PC-3 (cell line): ENCODE measurements at regions of chr15 and their contacts with region 1.

Region 1: GRCh38 chr15:49620658-49621368 is at the starts of genes DTWD1 and FAM227B:
- DNase-seq: peak; percentile 94
- ATAC-seq: peak; percentile 99
- H3K4me3 ChIP-seq: peak within 1 kb of the TSS; percentile 81
- H3K27ac ChIP-seq: peak within 1 kb of the TSS; percentile 82
- H3K4me1 ChIP-seq: peaks cover 15% of the 10 kb centered on the region
- H3K27me3 ChIP-seq: no peaks in the 10 kb centered on the region
- CTCF ChIP-seq: no peak
- total RNA-seq, gene DTWD1: 9.1 and 10.9 TPM in 2 replicates
- total RNA-seq, gene FAM227B: 0.98 and 1.6 TPM in 2 replicates

Region 2: GRCh38 chr15:49235446-49236124 is 385.2 kb before region 1 on chr15:
- CTCF ChIA-PET with region 1: no interaction called
- POLR2A ChIA-PET with region 1: no interaction called
- intact Hi-C with region 1: loop called (anchors 10 kb)
- DNase-seq: peak; percentile 60
- ATAC-seq: peak; percentile 88
- H3K4me3 ChIP-seq: no peak overlapping the region
- H3K27ac ChIP-seq: 0 out of 2 replicates have a peak overlapping the region, but pooled peaks have one; percentile 10
- H3K4me1 ChIP-seq: peaks cover 5% of the 10 kb centered on the region; the same call in 1 of the 2 replicates
- H3K27me3 ChIP-seq: no peaks in the 10 kb centered on the region
- CTCF ChIP-seq: peak; percentile 81

Region 3: DNA sequence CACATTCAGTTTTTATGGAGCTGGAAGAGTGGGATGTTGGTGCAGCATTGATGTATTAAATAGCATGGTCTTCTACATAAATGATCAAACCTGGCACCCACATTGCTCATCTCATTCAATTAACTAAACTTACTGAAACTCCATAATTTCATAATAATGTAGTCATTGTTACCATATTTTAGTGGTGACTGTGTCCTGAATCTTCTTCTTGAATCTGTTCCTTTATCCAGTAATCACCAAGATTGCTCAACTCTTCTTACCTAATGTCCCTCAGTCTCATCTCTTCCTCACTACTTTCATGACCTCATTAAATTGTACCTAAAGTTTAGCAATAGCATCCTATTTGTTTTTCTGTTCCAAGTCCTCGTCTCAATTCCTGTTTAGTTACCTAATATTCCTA is 128.0 kb before region 1 on chr15:
- CTCF ChIA-PET with region 1: interaction called, 3 read pairs
- POLR2A ChIA-PET with region 1: no interaction called
- intact Hi-C with region 1: loop called (anchors 2 kb)
- DNase-seq: peak; percentile 31
- ATAC-seq: no peak
- H3K4me3 ChIP-seq: no peak overlapping the region
- H3K27ac ChIP-seq: no peak overlapping the region
- H3K4me1 ChIP-seq: peaks cover 34% of the 10 kb centered on the region
- H3K27me3 ChIP-seq: no peaks in the 10 kb centered on the region
- CTCF ChIP-seq: no peak

Region 4: DNA sequence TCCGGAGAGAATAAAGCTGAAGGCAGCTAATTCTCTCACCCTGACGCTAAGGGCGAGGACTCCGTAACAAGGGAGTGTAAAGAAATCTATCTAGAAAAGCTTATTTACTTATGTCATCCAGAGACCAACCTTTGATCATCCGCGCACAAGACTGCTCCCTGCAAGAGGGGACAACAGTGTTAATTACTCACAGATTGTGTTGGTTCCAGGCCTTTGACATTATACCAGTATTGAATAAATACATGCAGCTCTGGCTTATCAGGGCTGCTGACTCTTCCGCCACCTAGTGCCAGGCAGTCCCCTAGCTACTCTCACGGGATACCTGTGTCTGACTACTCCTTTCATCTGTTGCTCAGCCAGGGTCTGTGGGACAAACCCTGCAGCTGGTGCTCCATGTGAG is 211.7 kb after region 1 on chr15:
- CTCF ChIA-PET with region 1: interaction called, 4 read pairs
- POLR2A ChIA-PET with region 1: no interaction called
- intact Hi-C with region 1: loop called (anchors 5 kb)
- DNase-seq: peak; percentile 52
- ATAC-seq: peak; percentile 83
- H3K4me3 ChIP-seq: no peak overlapping the region
- H3K27ac ChIP-seq: peak overlapping the region; percentile 80
- H3K4me1 ChIP-seq: peaks cover 18% of the 10 kb centered on the region
- H3K27me3 ChIP-seq: no peaks in the 10 kb centered on the region
- CTCF ChIP-seq: peak; percentile 58